ENCODE measurements at regions of chr19 and their contacts with region 1.

Region 1: GRCh38 chr19:984165-984967 is at the start of gene WDR18:
- DNase-seq: peak; percentile 94
- ATAC-seq: peak; percentile 90
- H3K4me3 ChIP-seq: peak within 1 kb of the TSS; percentile 40 to 99 (median 88)
- H3K4me3 Mint-ChIP-seq: peak within 1 kb of the TSS; percentile 95
- H3K27ac ChIP-seq: peak within 1 kb of the TSS; percentile 88 to 90
- H3K27ac Mint-ChIP-seq: peak within 1 kb of the TSS; percentile 93
- H3K4me1 ChIP-seq: peaks cover 19 to 27% of the 10 kb centered on the region in 2 donors
- H3K4me1 Mint-ChIP-seq: peaks cover 16% of the 10 kb centered on the region
- H3K27me3 ChIP-seq: no peaks in the 10 kb centered on the region
- H3K27me3 Mint-ChIP-seq: no peaks in the 10 kb centered on the region
- CTCF ChIP-seq: no peak
- total RNA-seq, gene WDR18: 50.5 and 60.5 TPM in 2 replicates

Region 2: DNA sequence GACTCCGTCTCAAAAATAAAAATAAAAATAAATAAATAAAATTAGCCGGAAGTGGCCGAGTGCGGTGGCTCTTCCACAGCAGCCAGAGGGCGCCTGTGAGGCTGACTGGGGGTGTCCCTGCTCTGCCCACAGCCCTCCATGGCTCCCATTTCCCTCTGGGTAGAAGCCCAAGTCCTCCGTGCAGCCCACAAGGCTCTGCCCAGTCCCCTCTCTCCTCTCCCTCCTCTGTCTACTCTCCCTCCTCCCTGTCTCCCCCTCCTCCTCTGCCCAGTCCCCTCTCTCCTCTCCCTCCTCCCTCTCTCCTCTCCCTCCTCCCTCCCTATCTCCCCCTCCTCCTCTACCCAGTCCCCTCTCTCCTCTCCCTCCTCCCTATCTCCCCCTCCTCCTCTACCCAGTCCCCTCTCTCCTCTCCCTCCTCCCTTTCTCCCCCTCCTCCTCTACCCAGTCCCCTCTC is 213.0 kb before region 1 on chr19:
- CTCF ChIA-PET with region 1: interaction called, 5 read pairs
- POLR2A ChIA-PET with region 1: no interaction called
- intact Hi-C with region 1: loop called (anchors 1 kb)
- DNase-seq: peak; percentile 50
- ATAC-seq: peak; percentile 45
- H3K4me3 ChIP-seq: no peak overlapping the region
- H3K4me3 Mint-ChIP-seq: no peak overlapping the region
- H3K27ac ChIP-seq: no peak overlapping the region
- H3K27ac Mint-ChIP-seq: no peak overlapping the region
- H3K4me1 ChIP-seq: peaks cover 0 to 3% of the 10 kb centered on the region in 2 donors
- H3K4me1 Mint-ChIP-seq: peaks cover 2% of the 10 kb centered on the region
- H3K27me3 ChIP-seq: peaks cover 0 to 15% (median 0%) of the 10 kb centered on the region in 4 experiments
- H3K27me3 Mint-ChIP-seq: peaks cover 10% of the 10 kb centered on the region
- CTCF ChIP-seq: peak; percentile 48

Region 3: DNA sequence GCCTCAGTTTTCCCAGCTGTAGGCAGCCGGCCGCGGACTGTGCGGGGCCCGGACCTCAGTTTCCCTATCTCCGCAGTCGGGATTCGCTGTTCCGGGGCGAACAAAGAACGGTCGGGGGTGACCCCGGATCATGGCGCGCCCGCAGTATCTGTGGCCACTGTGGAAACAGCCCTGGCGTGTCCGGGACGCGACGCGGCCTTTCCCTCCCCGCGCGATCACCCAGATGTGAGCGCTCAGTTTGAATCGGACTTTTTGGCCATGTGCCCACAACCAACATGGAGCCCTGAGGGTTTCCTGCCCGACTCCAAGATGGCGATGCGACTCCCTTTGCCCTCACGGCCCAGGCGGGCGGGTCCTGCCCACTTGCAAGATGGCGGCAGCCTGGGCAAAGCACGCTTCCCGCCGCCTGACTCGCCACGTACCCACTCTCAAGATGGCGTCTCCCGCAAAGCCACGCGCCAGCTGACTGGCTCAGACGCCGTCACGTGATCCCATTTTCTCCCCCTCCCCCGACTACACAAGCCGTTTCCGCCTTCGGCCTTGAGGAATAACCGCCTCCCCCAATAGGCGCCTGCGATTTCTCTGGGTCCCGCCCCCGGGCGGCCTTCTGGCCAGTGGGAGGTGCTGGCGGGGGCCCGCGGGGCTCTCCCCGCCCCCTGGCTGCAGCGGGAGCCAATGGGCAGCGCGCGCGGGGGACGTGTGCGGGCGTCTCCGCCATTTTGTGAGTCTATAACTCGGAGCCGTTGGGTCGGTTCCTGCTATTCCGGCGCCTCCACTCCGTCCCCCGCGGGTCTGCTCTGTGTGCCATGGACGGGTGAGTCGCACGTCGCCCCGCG is 187.5 kb before region 1 on chr19 and contains the start of gene PTBP1:
- CTCF ChIA-PET with region 1: no interaction called
- POLR2A ChIA-PET with region 1: interaction called, 5 read pairs
- intact Hi-C with region 1: loop called (anchors 2 kb)
- DNase-seq: peak; percentile 100
- ATAC-seq: peak; percentile 85
- H3K4me3 ChIP-seq: peak within 1 kb of the TSS; percentile 61 to 86 (median 78)
- H3K4me3 Mint-ChIP-seq: peak within 1 kb of the TSS; percentile 98
- H3K27ac ChIP-seq: peak within 1 kb of the TSS; percentile 57 to 74
- H3K27ac Mint-ChIP-seq: peak within 1 kb of the TSS; percentile 88
- H3K4me1 ChIP-seq: peaks cover 22 to 48% of the 10 kb centered on the region in 2 donors
- H3K4me1 Mint-ChIP-seq: peaks cover 33% of the 10 kb centered on the region
- H3K27me3 ChIP-seq: no peaks in the 10 kb centered on the region
- H3K27me3 Mint-ChIP-seq: no peaks in the 10 kb centered on the region
- CTCF ChIP-seq: no peak
- total RNA-seq, gene PTBP1: 304 and 309 TPM in 2 replicates

Region 4: GRCh38 chr19:947265-948036 is 36.9 kb before region 1 on chr19:
- CTCF ChIA-PET with region 1: interaction called, 26 read pairs
- POLR2A ChIA-PET with region 1: interaction called, 5 read pairs
- intact Hi-C with region 1: loop called (anchors 2 kb)
- DNase-seq: peak; percentile 97
- ATAC-seq: peak; percentile 81
- H3K4me3 ChIP-seq: peak overlapping the region in 4 of 5 experiments; percentile 23 to 41 (median 33)
- H3K4me3 Mint-ChIP-seq: peak overlapping the region; percentile 79
- H3K27ac ChIP-seq: peak overlapping the region; percentile 85 to 95
- H3K27ac Mint-ChIP-seq: peak overlapping the region; percentile 95
- H3K4me1 ChIP-seq: peaks cover 27 to 53% of the 10 kb centered on the region in 2 donors
- H3K4me1 Mint-ChIP-seq: peaks cover 50% of the 10 kb centered on the region
- H3K27me3 ChIP-seq: no peaks in the 10 kb centered on the region
- H3K27me3 Mint-ChIP-seq: no peaks in the 10 kb centered on the region
- CTCF ChIP-seq: no peak

Region 5: GRCh38 chr19:1001538-1002166 is 17.3 kb after region 1 on chr19:
- CTCF ChIA-PET with region 1: interaction called, 8 read pairs
- POLR2A ChIA-PET with region 1: interaction called, 9 read pairs
- intact Hi-C with region 1: loop called (anchors 1 kb)
- DNase-seq: peak; percentile 80
- ATAC-seq: peak; percentile 77
- H3K4me3 ChIP-seq: no peak overlapping the region
- H3K4me3 Mint-ChIP-seq: peak overlapping the region; percentile 59
- H3K27ac ChIP-seq: no peak overlapping the region
- H3K27ac Mint-ChIP-seq: no peak overlapping the region
- H3K4me1 ChIP-seq: peaks cover 13 to 14% of the 10 kb centered on the region in 2 donors
- H3K4me1 Mint-ChIP-seq: peaks cover 11% of the 10 kb centered on the region
- H3K27me3 ChIP-seq: peaks cover 0 to 56% (median 29%) of the 10 kb centered on the region in 4 experiments
- H3K27me3 Mint-ChIP-seq: peaks cover 24% of the 10 kb centered on the region
- CTCF ChIP-seq: peak; percentile 98